ENCODE measurements at regions of chr12 and their contacts with region 1.

Region 1: DNA sequence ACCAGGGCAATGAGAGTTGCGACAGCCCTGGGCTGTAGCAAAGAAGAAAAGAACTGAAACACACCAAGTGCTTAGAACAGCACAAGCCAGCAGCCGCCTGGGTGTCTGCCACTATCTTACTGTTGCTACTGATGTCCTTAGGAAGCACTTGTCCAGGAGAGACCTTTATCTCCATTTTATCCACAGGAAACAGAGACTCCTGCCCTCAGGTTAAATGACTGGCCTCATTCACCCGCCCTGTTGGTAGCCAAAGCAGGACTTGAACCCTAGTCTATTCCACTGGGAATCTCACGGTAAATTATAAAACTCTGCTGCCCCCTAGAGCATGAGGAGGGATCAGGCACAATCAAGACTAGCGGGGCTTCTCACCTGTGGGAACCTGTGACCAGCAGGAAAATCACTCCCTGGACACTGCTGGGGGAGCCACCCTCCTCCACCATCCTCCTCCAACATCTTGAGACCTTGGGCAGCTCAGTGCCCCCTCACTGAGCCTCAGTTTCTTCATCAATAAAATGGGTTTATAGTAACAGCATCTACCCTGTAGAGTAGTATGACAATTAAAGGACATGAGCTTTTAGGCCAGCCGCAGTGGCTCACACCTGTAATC is 20.5 kb upstream of the TESC start:
- DNase-seq: peak in 4 of 9 experiments; percentile 21 to 59 (median 44)
- ATAC-seq: peak; percentile 54
- H3K4me3 ChIP-seq: no peak overlapping the region
- H3K4me3 Mint-ChIP-seq: no peak overlapping the region
- H3K27ac ChIP-seq: no peak overlapping the region
- H3K27ac Mint-ChIP-seq: no peak overlapping the region
- H3K4me1 ChIP-seq: no peaks in the 10 kb centered on the region
- H3K4me1 Mint-ChIP-seq: no peaks in the 10 kb centered on the region
- H3K27me3 ChIP-seq: no peaks in the 10 kb centered on the region
- H3K27me3 Mint-ChIP-seq: no peaks in the 10 kb centered on the region
- CTCF ChIP-seq: peak; percentile 72

Region 2: DNA sequence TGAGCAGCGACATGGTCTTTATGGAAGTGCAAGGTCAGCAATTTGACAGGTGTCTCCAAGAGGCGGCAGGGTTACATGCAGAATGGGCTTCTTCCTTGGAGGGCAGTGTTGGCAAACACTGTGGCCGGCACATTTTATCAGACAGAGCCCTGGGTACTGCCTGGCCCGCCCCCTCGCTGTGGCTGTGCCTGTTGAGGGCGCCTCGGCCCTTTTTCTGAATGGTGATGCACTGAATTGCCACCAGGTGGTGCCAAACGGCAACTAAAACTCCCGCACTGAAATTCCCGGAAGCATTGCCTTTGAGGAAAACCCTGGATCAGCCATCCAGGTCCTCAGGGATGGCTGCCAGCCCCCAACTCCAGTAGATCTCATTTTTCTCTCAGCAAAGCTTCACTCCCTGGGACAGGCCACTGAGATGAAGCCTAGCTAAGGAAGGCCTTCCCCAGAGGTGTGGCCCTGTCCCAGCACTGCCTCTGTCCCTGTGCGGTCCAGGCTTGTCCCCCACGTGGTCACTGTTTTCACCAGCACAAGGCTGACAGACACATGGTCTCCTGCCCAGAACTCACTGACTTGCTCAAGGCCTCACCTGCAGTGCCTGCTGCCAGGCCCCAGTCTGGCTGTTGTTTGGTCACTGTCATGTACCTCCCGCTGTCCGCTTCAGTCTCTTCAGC is 94.1 kb before region 1 on chr12:
- CTCF ChIA-PET with region 1: interaction called, 141 read pairs
- POLR2A ChIA-PET with region 1: no interaction called
- intact Hi-C with region 1: loop called in 1 of 2 experiments (anchors 1 kb)
- DNase-seq: peak in 8 of 9 experiments; percentile 16 to 67 (median 48)
- ATAC-seq: peak; percentile 70
- H3K4me3 ChIP-seq: no peak overlapping the region
- H3K4me3 Mint-ChIP-seq: no peak overlapping the region
- H3K27ac ChIP-seq: no peak overlapping the region
- H3K27ac Mint-ChIP-seq: no peak overlapping the region
- H3K4me1 ChIP-seq: no peaks in the 10 kb centered on the region
- H3K4me1 Mint-ChIP-seq: no peaks in the 10 kb centered on the region
- H3K27me3 ChIP-seq: no peaks in the 10 kb centered on the region
- H3K27me3 Mint-ChIP-seq: no peaks in the 10 kb centered on the region
- CTCF ChIP-seq: peak; percentile 93

Region 3: GRCh38 chr12:117063162-117063911 is 56.4 kb before region 1 on chr12:
- CTCF ChIA-PET with region 1: interaction called, 11 read pairs
- POLR2A ChIA-PET with region 1: no interaction called
- intact Hi-C with region 1: no loop called
- DNase-seq: peak in 8 of 9 experiments; percentile 14 to 78 (median 42)
- ATAC-seq: peak; percentile 82
- H3K4me3 ChIP-seq: peak overlapping the region; percentile 30 to 42
- H3K4me3 Mint-ChIP-seq: peak overlapping the region; percentile 72
- H3K27ac ChIP-seq: peak overlapping the region; percentile 4 to 70
- H3K27ac Mint-ChIP-seq: peak overlapping the region; percentile 84
- H3K4me1 ChIP-seq: peaks cover 28% of the 10 kb centered on the region
- H3K4me1 Mint-ChIP-seq: peaks cover 48% of the 10 kb centered on the region
- H3K27me3 ChIP-seq: no peaks in the 10 kb centered on the region
- H3K27me3 Mint-ChIP-seq: no peaks in the 10 kb centered on the region
- CTCF ChIP-seq: no peak

Region 4: GRCh38 chr12:117076410-117077372 is 43.0 kb before region 1 on chr12:
- CTCF ChIA-PET with region 1: no interaction called
- POLR2A ChIA-PET with region 1: no interaction called
- intact Hi-C with region 1: no loop called
- DNase-seq: no peak
- ATAC-seq: no peak
- H3K4me3 ChIP-seq: no peak overlapping the region
- H3K4me3 Mint-ChIP-seq: no peak overlapping the region
- H3K27ac ChIP-seq: no peak overlapping the region
- H3K27ac Mint-ChIP-seq: no peak overlapping the region
- H3K4me1 ChIP-seq: peaks cover 8% of the 10 kb centered on the region
- H3K4me1 Mint-ChIP-seq: peaks cover 7% of the 10 kb centered on the region
- H3K27me3 ChIP-seq: no peaks in the 10 kb centered on the region
- H3K27me3 Mint-ChIP-seq: no peaks in the 10 kb centered on the region
- CTCF ChIP-seq: no peak

Region 5: GRCh38 chr12:117134059-117134458 is 14.4 kb after region 1 on chr12:
- CTCF ChIA-PET with region 1: interaction called, 41 read pairs
- POLR2A ChIA-PET with region 1: no interaction called
- intact Hi-C with region 1: no loop called
- DNase-seq: peak in 8 of 9 experiments; percentile 19 to 76 (median 54)
- ATAC-seq: peak; percentile 81
- H3K4me3 ChIP-seq: no peak overlapping the region
- H3K4me3 Mint-ChIP-seq: peak overlapping the region; percentile 21
- H3K27ac ChIP-seq: peak overlapping the region in 1 of 2 experiments; percentile 34
- H3K27ac Mint-ChIP-seq: peak overlapping the region; percentile 7
- H3K4me1 ChIP-seq: peaks cover 15% of the 10 kb centered on the region
- H3K4me1 Mint-ChIP-seq: peaks cover 10% of the 10 kb centered on the region
- H3K27me3 ChIP-seq: no peaks in the 10 kb centered on the region
- H3K27me3 Mint-ChIP-seq: no peaks in the 10 kb centered on the region
- CTCF ChIP-seq: no peak

Region 6: GRCh38 chr12:117231750-117232149 is 112.1 kb after region 1 on chr12:
- CTCF ChIA-PET with region 1: no interaction called
- POLR2A ChIA-PET with region 1: no interaction called
- intact Hi-C with region 1: no loop called
- DNase-seq: no peak
- ATAC-seq: no peak
- H3K4me3 ChIP-seq: no peak overlapping the region
- H3K4me3 Mint-ChIP-seq: no peak overlapping the region
- H3K27ac ChIP-seq: no peak overlapping the region
- H3K27ac Mint-ChIP-seq: no peak overlapping the region
- H3K4me1 ChIP-seq: no peaks in the 10 kb centered on the region
- H3K4me1 Mint-ChIP-seq: no peaks in the 10 kb centered on the region
- H3K27me3 ChIP-seq: no peaks in the 10 kb centered on the region
- H3K27me3 Mint-ChIP-seq: peaks cover 31% of the 10 kb centered on the region
- CTCF ChIP-seq: no peak

Measured in CD8-positive, alpha-beta T cell (primary cell).